Posterior vena cava (tissue), 2 donors: ENCODE measurements at regions of chr4 and their contacts with region 1.

Region 1: GRCh38 chr4:183241322-183241640 is 78.8 kb downstream of the CLDN22 start:
- DNase-seq: no peak

Region 2: DNA sequence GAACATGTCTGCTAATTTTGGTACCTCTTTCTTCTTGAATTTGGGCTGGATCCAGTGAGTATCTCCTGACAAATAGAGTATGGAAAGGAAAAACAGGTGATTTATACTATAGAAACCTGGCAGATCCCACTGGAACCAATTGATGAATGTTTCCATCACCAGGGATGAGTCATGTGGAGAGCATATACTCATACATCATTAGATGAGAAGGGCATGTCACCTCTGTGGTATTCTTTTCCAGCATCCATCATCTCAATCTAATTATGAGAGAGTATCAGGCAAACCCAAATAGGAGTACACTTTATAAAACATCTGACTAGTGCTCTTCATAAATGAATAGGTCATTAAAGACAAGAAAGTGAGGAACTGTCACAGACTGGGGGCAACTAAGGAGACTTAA is 11.9 kb before region 1 on chr4:
- intact Hi-C with region 1: loop called in 1 of 2 experiments (anchors 2 kb)
- DNase-seq: no peak

Region 3: GRCh38 chr4:183430317-183430993 is 189.2 kb after region 1 on chr4:
- intact Hi-C with region 1: no loop called
- DNase-seq: no peak